ENCODE measurements at regions of chr11 and their contacts with region 1.

Region 1: DNA sequence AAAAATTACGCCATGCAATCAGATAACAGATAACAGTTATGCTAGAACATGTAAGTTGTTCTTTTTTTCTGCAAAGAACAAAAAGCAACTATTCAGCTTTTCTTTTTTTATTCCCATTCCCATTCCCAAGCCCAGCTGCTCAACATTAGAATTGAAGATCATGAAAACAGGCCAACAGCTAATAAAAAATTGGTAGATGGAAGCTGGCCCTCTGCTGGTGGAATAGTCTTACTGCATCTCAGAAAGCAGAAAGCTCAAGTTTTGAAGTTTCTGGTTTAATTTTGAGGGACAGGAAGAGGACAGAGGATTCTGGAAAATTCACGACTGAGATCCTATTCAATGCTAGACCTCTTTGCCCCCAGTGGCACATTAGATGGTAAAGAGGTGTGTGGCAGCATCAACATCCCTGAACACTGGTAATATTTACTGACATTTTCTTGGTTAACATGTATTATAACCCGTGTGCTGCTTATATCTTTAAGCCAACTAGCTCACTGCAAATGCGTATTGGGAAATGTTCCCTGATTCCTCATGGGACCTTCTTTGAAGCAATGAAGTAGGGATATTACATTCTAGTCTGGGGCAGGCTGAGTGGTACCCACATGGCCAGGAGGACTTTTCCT is 591.2 kb downstream of the OPCML start:
- DNase-seq: peak in 1 of 35 experiments; percentile 15
- ATAC-seq: no peak
- H3K4me3 ChIP-seq: no peak overlapping the region
- H3K4me3 Mint-ChIP-seq: no peak overlapping the region
- H3K27ac ChIP-seq: no peak overlapping the region
- H3K27ac Mint-ChIP-seq: no peak overlapping the region
- H3K4me1 ChIP-seq: no peaks in the 10 kb centered on the region
- H3K4me1 Mint-ChIP-seq: peaks cover 0 to 3% (median 2%) of the 10 kb centered on the region in 3 donors
- H3K27me3 ChIP-seq: peaks cover 10 to 23% of the 10 kb centered on the region in 2 experiments
- H3K27me3 Mint-ChIP-seq: peaks cover 18 to 42% of the 10 kb centered on the region in 2 donors

Region 2: GRCh38 chr11:132278801-132279574 is 662.1 kb before region 1 on chr11:
- CTCF ChIA-PET with region 1: interaction called in 1 of 2 experiments, 12 read pairs
- POLR2A ChIA-PET with region 1: no interaction called
- DNase-seq: peak in 1 of 35 experiments; percentile 2
- ATAC-seq: no peak
- H3K4me3 ChIP-seq: no peak overlapping the region
- H3K4me3 Mint-ChIP-seq: no peak overlapping the region
- H3K27ac ChIP-seq: no peak overlapping the region
- H3K27ac Mint-ChIP-seq: no peak overlapping the region
- H3K4me1 ChIP-seq: no peaks in the 10 kb centered on the region
- H3K4me1 Mint-ChIP-seq: no peaks in the 10 kb centered on the region
- H3K27me3 ChIP-seq: peaks cover 0 to 5% of the 10 kb centered on the region in 2 experiments
- H3K27me3 Mint-ChIP-seq: no peaks in the 10 kb centered on the region

Region 3: DNA sequence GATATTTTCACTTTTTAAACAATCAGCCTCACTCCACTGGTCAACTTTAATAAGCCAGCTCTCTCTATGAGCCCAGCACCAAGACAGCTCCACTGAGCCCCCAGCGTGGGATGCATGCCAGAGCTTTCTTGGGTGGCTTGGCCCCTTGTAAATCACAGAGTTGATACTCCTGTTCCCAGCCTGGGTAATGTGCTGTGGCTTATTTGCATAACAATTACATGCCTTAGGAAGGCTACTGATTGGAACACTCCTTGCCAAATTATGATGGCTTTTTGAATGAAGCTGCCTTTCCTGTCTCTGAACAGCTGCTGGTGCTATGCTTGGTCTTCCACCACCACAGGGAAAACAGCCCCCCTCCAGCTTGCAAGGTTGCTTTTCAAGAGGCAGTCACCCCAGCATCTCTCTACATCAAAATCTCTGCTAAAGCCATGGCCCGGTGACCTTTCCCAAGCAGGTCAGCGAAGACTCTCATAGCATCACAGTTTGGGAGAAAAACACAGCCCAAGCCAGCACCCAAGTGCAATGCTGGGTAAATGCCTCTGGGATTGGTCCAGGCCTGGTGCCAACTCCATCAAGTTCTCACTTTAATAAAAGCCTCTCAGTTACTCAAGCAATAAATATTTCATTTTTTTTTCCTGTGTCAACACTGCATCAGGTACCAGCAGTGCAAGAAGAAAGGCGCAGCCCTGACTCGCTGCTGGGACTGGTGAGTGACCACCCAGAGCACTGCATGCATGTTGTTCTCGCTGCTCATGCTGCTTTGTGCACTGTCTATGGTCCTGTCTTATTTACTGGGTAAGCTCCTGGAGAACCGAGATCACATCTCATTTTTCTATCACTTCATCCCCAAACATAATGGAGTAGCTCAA is 41.9 kb after region 1 on chr11:
- CTCF ChIA-PET with region 1: no interaction called
- POLR2A ChIA-PET with region 1: no interaction called
- DNase-seq: no peak
- ATAC-seq: no peak
- H3K4me3 ChIP-seq: no peak overlapping the region
- H3K4me3 Mint-ChIP-seq: no peak overlapping the region
- H3K27ac ChIP-seq: no peak overlapping the region
- H3K27ac Mint-ChIP-seq: no peak overlapping the region
- H3K4me1 ChIP-seq: no peaks in the 10 kb centered on the region
- H3K4me1 Mint-ChIP-seq: no peaks in the 10 kb centered on the region
- H3K27me3 ChIP-seq: no peaks in the 10 kb centered on the region
- H3K27me3 Mint-ChIP-seq: no peaks in the 10 kb centered on the region

Measured in T-cell (primary cell).